ENCODE measurements at regions of chr11 and their contacts with region 1.

Region 1: DNA sequence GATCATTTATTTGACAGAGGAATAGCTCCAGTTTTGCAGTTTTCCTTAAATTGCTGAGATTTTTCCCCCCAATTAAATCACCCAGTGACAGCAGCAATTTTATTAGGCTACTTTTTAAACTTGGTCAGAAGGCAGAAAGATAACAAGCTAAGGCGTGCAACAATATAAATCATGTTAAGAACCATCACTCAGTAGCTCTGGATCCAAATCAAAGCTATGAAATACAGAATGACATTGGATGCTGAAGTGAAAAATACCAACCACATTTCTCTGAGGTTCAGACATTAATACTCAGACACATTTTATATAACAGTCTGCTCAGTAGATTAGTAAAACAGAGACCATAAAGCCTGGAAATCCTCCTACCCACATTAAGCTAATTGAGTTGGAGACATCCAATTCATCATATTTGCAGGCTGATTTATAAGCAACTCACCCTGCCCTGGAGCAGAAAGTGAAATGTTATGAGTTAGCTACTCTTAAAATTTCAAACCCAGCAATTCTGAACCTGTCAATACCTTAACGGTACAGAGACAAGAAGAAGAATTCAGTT is 1108.4 kb downstream of the DLG2 start:
- DNase-seq: no peak
- ATAC-seq: no peak

Region 2: GRCh38 chr11:83827940-83828554 is 690.7 kb before region 1 on chr11:
- intact Hi-C with region 1: loop called (anchors 5 kb)
- DNase-seq: no peak
- ATAC-seq: peak; percentile 68

Region 3: GRCh38 chr11:84173078-84173477 is 345.6 kb before region 1 on chr11:
- intact Hi-C with region 1: no loop called
- DNase-seq: no peak
- ATAC-seq: no peak

Region 4: GRCh38 chr11:84564180-84564866 is 45.6 kb after region 1 on chr11:
- intact Hi-C with region 1: no loop called
- DNase-seq: no peak
- ATAC-seq: no peak